ENCODE measurements at regions of chr11 and their contacts with region 1.

Region 1: DNA sequence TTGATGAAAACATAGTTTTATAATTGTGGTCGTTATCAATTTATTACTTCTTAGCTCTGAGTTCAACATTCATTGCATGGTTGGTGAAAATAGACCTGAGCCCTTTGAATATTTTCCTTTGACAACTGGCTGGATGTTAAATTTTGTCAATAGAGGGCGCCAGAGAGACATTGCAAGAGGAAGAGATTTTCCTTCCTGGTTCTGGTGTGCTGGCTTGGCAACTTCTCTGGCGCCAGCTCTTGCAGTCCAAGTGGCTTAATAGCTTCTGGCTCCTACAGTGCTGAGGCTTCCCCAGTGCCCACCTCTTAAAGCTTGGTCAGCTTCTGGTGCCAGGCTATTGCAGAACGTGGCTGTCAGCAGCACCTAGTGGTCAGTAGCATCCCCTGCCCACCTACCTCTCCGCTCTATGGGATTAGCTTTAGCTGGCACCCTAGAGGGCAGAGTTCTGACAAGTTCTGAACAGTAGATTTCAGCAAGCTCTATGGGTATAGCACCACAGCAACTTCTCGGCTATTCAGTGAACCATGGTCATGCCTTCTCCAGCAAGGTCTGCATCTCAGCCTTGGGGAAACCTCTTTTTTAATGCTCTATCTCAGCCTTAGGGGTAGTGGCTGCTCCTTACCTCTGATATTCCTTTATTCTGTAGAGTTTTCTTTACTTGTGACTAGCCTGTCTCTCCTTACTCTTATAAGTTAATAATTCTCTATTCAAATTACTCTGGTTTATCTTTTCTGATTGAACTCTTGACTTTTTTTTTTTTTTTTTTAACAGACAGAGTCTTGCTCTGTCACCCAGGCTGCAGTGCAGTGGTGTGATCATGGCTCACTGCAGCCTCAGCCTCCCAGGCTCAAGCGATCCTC is 59.4 kb downstream of the ACER3 start:
- DNase-seq: peak; percentile 77
- H3K4me3 ChIP-seq: no peak overlapping the region
- H3K27ac ChIP-seq: no peak overlapping the region
- H3K4me1 ChIP-seq: peaks cover 7% of the 10 kb centered on the region
- H3K27me3 ChIP-seq: no peaks in the 10 kb centered on the region
- CTCF ChIP-seq: peak; percentile 70 to 77
- POLR2A ChIP-seq: no peak

Region 2: GRCh38 chr11:76670485-76671236 is 249.5 kb before region 1 on chr11 and contains the start of gene LRRC32:
- CTCF ChIA-PET with region 1: no interaction called
- POLR2A ChIA-PET with region 1: no interaction called
- dilution Hi-C with region 1: no loop called
- intact Hi-C with region 1: no loop called
- DNase-seq: peak; percentile 82
- H3K4me3 ChIP-seq: peak within 1 kb of the TSS; percentile 2 to 67 (median 59)
- H3K27ac ChIP-seq: peak within 1 kb of the TSS; percentile 79
- H3K4me1 ChIP-seq: peaks cover 53% of the 10 kb centered on the region
- H3K27me3 ChIP-seq: no peaks in the 10 kb centered on the region
- CTCF ChIP-seq: peak in 1 of 2 donors; percentile 33
- POLR2A ChIP-seq: peak; percentile 41
- total RNA-seq, gene LRRC32: 77.0 and 117 TPM in 2 replicates

Region 3: DNA sequence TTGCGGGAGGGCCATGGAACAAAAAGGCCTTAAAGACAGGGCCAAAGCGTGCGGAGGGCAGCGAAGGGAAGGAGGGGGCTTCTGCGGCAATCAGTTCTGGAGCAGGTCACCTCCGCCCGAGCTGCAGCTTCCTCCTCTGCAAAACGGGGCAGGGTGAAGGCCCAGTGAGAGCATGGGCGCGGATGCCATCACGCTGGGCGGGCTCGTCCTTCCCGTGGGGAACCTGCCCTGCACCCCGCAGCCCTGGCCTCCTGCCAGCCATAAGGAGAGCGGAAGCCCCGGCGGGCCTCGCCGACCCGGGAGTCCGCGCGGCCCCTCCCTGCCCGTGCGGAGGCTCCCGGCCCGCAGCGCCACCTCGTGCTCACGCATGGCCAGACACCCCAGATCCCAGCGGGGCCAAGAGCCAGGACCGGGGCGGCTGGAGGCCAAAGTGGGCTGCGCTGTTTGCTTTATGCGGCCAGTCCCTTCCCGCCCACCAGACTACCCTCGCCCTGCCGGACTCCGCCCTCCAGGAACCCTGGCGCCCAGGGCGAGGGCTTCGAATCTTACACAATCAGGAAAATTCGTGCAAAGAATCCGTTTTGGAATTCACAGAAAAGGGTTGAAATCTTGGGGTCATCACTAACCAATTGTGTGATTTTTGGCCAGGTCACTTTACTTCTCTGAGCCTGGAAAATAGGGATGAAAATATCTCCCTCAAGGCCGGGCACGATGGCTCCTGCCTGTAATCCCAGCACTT is 120.9 kb before region 1 on chr11:
- CTCF ChIA-PET with region 1: interaction called, 81 read pairs
- POLR2A ChIA-PET with region 1: no interaction called
- dilution Hi-C with region 1: loop called (anchors 25 kb)
- intact Hi-C with region 1: no loop called
- DNase-seq: peak; percentile 62
- H3K4me3 ChIP-seq: peak overlapping the region in 1 of 3 experiments; percentile 30
- H3K27ac ChIP-seq: no peak overlapping the region
- H3K4me1 ChIP-seq: peaks cover 7% of the 10 kb centered on the region
- H3K27me3 ChIP-seq: no peaks in the 10 kb centered on the region
- CTCF ChIP-seq: peak; percentile 89 to 95
- POLR2A ChIP-seq: no peak

Region 4: DNA sequence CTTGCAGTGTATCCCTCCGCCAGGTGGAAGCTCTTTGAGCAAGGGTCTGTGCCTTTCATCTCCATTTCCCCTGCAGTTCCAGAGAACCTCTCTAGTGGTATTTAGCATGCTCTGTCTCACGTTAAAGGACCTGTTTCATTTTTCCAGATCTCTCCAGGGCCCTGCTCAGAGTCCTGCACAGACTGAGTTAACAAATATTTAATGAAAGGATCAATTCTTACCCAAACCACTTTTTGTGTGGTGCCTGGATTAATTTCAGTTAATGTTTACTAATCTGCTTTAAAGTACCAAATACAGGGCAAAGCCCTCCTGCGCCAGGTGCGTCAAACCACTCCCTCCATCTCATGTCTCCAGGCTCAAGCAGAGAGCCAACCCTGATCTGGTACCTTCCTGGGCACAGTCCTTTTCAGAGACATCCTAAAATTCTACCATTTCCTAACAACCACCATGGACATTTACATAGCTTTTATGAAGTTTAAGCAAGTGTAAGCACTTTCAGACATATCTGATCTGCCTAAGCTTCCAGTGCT is 78.1 kb before region 1 on chr11:
- CTCF ChIA-PET with region 1: interaction called, 38 read pairs
- POLR2A ChIA-PET with region 1: no interaction called
- dilution Hi-C with region 1: no loop called
- intact Hi-C with region 1: loop called (anchors 1 kb)
- DNase-seq: no peak
- H3K4me3 ChIP-seq: no peak overlapping the region
- H3K27ac ChIP-seq: no peak overlapping the region
- H3K4me1 ChIP-seq: peaks cover 27% of the 10 kb centered on the region
- H3K27me3 ChIP-seq: no peaks in the 10 kb centered on the region
- CTCF ChIP-seq: no peak
- POLR2A ChIP-seq: no peak

Region 5: GRCh38 chr11:76880314-76880713 is 39.8 kb before region 1 on chr11:
- CTCF ChIA-PET with region 1: interaction called, 71 read pairs
- POLR2A ChIA-PET with region 1: no interaction called
- dilution Hi-C with region 1: no loop called
- intact Hi-C with region 1: loop called (anchors 2 kb)
- DNase-seq: peak; percentile 59
- H3K4me3 ChIP-seq: no peak overlapping the region
- H3K27ac ChIP-seq: peak overlapping the region; percentile 18
- H3K4me1 ChIP-seq: peaks cover 33% of the 10 kb centered on the region
- H3K27me3 ChIP-seq: no peaks in the 10 kb centered on the region
- CTCF ChIP-seq: no peak
- POLR2A ChIP-seq: no peak

Region 6: GRCh38 chr11:76990628-76991027 is 70.5 kb after region 1 on chr11:
- CTCF ChIA-PET with region 1: interaction called, 10 read pairs
- POLR2A ChIA-PET with region 1: no interaction called
- dilution Hi-C with region 1: no loop called
- intact Hi-C with region 1: no loop called
- DNase-seq: no peak
- H3K4me3 ChIP-seq: no peak overlapping the region
- H3K27ac ChIP-seq: no peak overlapping the region
- H3K4me1 ChIP-seq: no peaks in the 10 kb centered on the region
- H3K27me3 ChIP-seq: no peaks in the 10 kb centered on the region
- CTCF ChIP-seq: no peak
- POLR2A ChIP-seq: no peak

Region 7: GRCh38 chr11:77039491-77040400 is 119.6 kb after region 1 on chr11:
- CTCF ChIA-PET with region 1: interaction called, 62 read pairs
- POLR2A ChIA-PET with region 1: no interaction called
- dilution Hi-C with region 1: no loop called
- intact Hi-C with region 1: loop called (anchors 1 kb)
- DNase-seq: peak; percentile 53
- H3K4me3 ChIP-seq: peak overlapping the region in 2 of 3 experiments; percentile 8 to 36
- H3K27ac ChIP-seq: no peak overlapping the region
- H3K4me1 ChIP-seq: peaks cover 2% of the 10 kb centered on the region
- H3K27me3 ChIP-seq: peaks cover 8 to 11% of the 10 kb centered on the region in 2 experiments
- CTCF ChIP-seq: peak; percentile 48 to 70
- POLR2A ChIP-seq: no peak

Region 8: GRCh38 chr11:77187776-77188632 is 267.9 kb after region 1 on chr11:
- CTCF ChIA-PET with region 1: no interaction called
- POLR2A ChIA-PET with region 1: no interaction called
- dilution Hi-C with region 1: no loop called
- intact Hi-C with region 1: loop called (anchors 1 kb)
- DNase-seq: peak; percentile 75
- H3K4me3 ChIP-seq: no peak overlapping the region
- H3K27ac ChIP-seq: no peak overlapping the region
- H3K4me1 ChIP-seq: no peaks in the 10 kb centered on the region
- H3K27me3 ChIP-seq: no peaks in the 10 kb centered on the region
- CTCF ChIP-seq: peak; percentile 81 to 94
- POLR2A ChIP-seq: no peak

Measured in endothelial cell of umbilical vein (primary cell).